CD8-positive, alpha-beta T cell (primary cell): ENCODE measurements at regions of chr10 and their contacts with region 1.

Region 1: DNA sequence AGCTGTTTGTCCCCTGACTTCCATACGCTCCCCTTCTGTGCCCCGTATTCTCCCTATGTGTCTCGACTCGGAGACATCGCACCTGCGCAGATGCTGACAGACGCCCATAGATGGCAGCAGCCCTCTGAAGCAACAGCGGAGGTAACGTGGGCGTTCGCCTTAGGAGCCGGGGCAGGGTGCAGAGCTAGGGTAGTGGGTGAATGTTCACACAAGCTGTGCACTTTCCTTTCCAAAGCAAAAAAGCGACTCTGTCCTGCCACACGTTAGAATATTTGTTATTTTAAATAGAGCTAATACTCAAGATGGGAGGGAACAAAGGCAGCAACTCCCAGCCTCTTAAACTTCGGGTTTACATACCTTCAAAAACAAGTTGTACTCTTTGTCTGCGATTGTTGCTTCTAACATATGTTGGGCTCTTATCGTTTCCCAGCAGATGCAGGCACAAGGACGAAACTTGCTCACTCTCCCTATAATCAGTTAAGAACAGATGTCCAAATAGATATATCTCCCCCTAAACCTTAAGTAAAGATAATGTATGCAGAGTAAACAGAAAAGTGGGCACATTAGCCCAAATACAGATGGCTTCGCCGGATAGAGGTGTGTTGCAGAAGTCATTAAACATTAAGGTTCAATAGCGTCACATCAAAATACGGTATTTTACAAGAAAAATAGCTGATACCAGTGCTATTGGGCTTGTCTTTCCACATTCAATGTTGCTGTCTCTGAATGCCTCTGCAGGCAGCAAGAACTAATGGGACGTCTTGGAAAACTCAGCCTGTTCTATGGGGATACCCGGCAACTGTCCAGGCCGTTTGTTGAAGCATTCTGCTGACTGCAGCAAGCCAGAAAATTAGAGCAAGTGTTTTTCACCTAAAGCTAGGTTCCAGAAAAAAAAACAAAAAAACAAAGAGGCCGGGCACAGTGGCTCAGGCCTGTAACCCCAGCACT is 340.3 kb upstream of the PRKCQ start:
- DNase-seq: peak; percentile 50 to 88 (median 78)
- ATAC-seq: peak; percentile 99
- H3K4me3 ChIP-seq: no peak overlapping the region
- H3K4me3 Mint-ChIP-seq: no peak overlapping the region
- H3K27ac ChIP-seq: no peak overlapping the region
- H3K27ac Mint-ChIP-seq: no peak overlapping the region
- H3K4me1 ChIP-seq: peaks cover 8% of the 10 kb centered on the region
- H3K4me1 Mint-ChIP-seq: peaks cover 20% of the 10 kb centered on the region
- H3K27me3 ChIP-seq: peaks cover 0 to 2% of the 10 kb centered on the region in 2 experiments
- H3K27me3 Mint-ChIP-seq: peaks cover 6% of the 10 kb centered on the region
- CTCF ChIP-seq: peak; percentile 84

Region 2: GRCh38 chr10:6950133-6950532 is 29.8 kb after region 1 on chr10:
- CTCF ChIA-PET with region 1: interaction called, 5 read pairs
- POLR2A ChIA-PET with region 1: no interaction called
- intact Hi-C with region 1: loop called in 1 of 2 experiments (anchors 2 kb)
- DNase-seq: no peak
- ATAC-seq: no peak
- H3K4me3 ChIP-seq: no peak overlapping the region
- H3K4me3 Mint-ChIP-seq: no peak overlapping the region
- H3K27ac ChIP-seq: no peak overlapping the region
- H3K27ac Mint-ChIP-seq: no peak overlapping the region
- H3K4me1 ChIP-seq: no peaks in the 10 kb centered on the region
- H3K4me1 Mint-ChIP-seq: no peaks in the 10 kb centered on the region
- H3K27me3 ChIP-seq: no peaks in the 10 kb centered on the region
- H3K27me3 Mint-ChIP-seq: no peaks in the 10 kb centered on the region
- CTCF ChIP-seq: no peak

Region 3: GRCh38 chr10:7102557-7103349 is 182.4 kb after region 1 on chr10:
- CTCF ChIA-PET with region 1: interaction called, 16 read pairs
- POLR2A ChIA-PET with region 1: no interaction called
- intact Hi-C with region 1: no loop called
- DNase-seq: no peak
- ATAC-seq: no peak
- H3K4me3 ChIP-seq: no peak overlapping the region
- H3K4me3 Mint-ChIP-seq: no peak overlapping the region
- H3K27ac ChIP-seq: no peak overlapping the region
- H3K27ac Mint-ChIP-seq: no peak overlapping the region
- H3K4me1 ChIP-seq: no peaks in the 10 kb centered on the region
- H3K4me1 Mint-ChIP-seq: peaks cover 4% of the 10 kb centered on the region
- H3K27me3 ChIP-seq: no peaks in the 10 kb centered on the region
- H3K27me3 Mint-ChIP-seq: no peaks in the 10 kb centered on the region
- CTCF ChIP-seq: no peak

Region 4: DNA sequence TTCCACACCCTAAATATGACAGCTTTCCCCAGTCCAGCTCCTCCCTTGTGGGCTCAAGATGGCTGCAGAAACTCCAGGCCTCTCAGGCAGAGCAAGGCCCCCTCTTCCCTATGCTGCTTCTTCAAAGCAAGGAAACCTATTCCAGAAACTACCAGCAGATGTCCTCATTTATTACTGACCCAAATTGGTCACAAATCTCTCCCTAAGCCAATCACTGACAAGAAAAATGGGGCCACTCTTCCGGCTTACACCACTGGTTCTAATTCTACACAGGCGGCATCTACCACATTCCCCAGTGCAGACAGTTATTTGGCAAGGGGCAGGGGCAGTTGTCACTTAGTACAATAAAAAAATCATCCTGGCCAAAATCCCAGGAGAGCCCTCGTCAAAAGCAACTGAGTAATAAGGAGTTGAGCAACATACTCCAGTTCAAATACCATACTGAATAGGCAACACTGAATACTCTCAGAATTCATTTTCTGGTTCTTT is 340.1 kb after region 1 on chr10:
- CTCF ChIA-PET with region 1: interaction called, 8 read pairs
- POLR2A ChIA-PET with region 1: no interaction called
- intact Hi-C with region 1: loop called (anchors 5 kb)
- DNase-seq: peak in 2 of 9 experiments; percentile 67 to 74
- ATAC-seq: no peak
- H3K4me3 ChIP-seq: no peak overlapping the region
- H3K4me3 Mint-ChIP-seq: no peak overlapping the region
- H3K27ac ChIP-seq: no peak overlapping the region
- H3K27ac Mint-ChIP-seq: peak overlapping the region; percentile 73
- H3K4me1 ChIP-seq: peaks cover 48% of the 10 kb centered on the region
- H3K4me1 Mint-ChIP-seq: peaks cover 52% of the 10 kb centered on the region
- H3K27me3 ChIP-seq: no peaks in the 10 kb centered on the region
- H3K27me3 Mint-ChIP-seq: no peaks in the 10 kb centered on the region
- CTCF ChIP-seq: no peak

Region 5: GRCh38 chr10:7424315-7424714 is 504.0 kb after region 1 on chr10:
- CTCF ChIA-PET with region 1: interaction called, 136 read pairs
- POLR2A ChIA-PET with region 1: no interaction called
- intact Hi-C with region 1: no loop called
- DNase-seq: peak in 6 of 9 experiments; percentile 26 to 70 (median 58)
- ATAC-seq: peak; percentile 91
- H3K4me3 ChIP-seq: no peak overlapping the region
- H3K4me3 Mint-ChIP-seq: no peak overlapping the region
- H3K27ac ChIP-seq: no peak overlapping the region
- H3K27ac Mint-ChIP-seq: peak overlapping the region; percentile 49
- H3K4me1 ChIP-seq: no peaks in the 10 kb centered on the region
- H3K4me1 Mint-ChIP-seq: peaks cover 24% of the 10 kb centered on the region
- H3K27me3 ChIP-seq: no peaks in the 10 kb centered on the region
- H3K27me3 Mint-ChIP-seq: no peaks in the 10 kb centered on the region
- CTCF ChIP-seq: no peak